HCT116 (cell line): ENCODE measurements at regions of chr1 and their contacts with region 1.

Region 1: GRCh38 chr1:155591770-155592169 is 18.2 kb upstream of the MSTO1 start:
- DNase-seq: peak; percentile 70
- ATAC-seq: peak; percentile 83
- H3K4me3 ChIP-seq: no peak overlapping the region
- H3K27ac ChIP-seq: no peak overlapping the region
- H3K4me1 ChIP-seq: no peaks in the 10 kb centered on the region
- H3K27me3 ChIP-seq: no peaks in the 10 kb centered on the region
- CTCF ChIP-seq: peak; percentile 40 to 84 (median 59)
- POLR2A ChIP-seq: no peak
- RAD21 ChIP-seq: peak; percentile 84

Region 2: DNA sequence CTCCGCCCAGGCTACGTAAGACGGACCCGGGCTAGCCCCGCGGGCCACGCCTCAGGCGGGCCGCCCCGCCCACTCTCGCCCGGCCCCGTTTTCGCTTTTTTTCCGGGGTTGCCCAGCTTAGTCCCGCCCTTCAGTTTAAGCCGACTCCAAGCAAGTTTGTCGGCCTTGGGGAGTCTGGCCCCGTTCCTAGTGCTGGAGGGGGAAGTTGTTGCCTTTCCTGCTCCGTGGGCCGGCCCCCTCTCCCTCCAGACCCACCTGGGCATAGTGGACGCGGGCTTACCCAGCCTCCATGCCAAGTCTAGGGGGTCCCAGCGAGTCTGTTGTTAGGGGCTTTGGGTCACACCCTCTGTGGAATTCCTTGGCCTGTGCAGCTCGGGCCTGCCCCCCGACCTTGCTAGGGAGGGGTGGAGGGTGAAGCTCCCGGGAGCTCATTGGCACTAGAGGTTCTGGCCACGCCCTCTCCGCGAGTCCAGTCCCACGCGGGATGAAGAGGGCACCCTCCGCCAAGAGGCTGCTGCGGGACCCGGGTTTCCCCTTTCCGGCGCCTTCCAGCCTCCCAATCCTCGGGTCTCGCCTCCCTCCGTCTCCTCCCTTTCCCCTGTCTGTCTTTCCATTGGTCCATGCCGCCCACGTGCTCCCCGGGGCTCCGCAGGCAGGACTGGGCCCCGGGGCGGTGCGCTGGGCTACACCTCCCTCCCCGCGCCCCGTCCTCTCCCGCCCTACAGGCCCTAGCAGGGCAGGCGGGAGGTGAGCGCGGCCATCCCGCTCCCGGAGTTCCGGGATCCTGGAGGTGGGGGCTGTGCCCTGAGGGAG is 267.8 kb before region 1 on chr1:
- CTCF ChIA-PET with region 1: no interaction called
- POLR2A ChIA-PET with region 1: no interaction called
- RAD21 ChIA-PET with region 1: no interaction called
- intact Hi-C with region 1: loop called (anchors 5 kb)
- DNase-seq: peak; percentile 89
- ATAC-seq: peak; percentile 77
- H3K4me3 ChIP-seq: peak overlapping the region; percentile 83 to 96
- H3K27ac ChIP-seq: peak overlapping the region; percentile 96
- H3K4me1 ChIP-seq: peaks cover 15 to 25% of the 10 kb centered on the region in 2 experiments
- H3K27me3 ChIP-seq: no peaks in the 10 kb centered on the region
- CTCF ChIP-seq: no peak
- POLR2A ChIP-seq: peak; percentile 85
- RAD21 ChIP-seq: no peak